Activated CD4-positive, alpha-beta memory T cell treated with anti-CD3 and anti-CD28 coated beads, Interleukin-2, amount 10 ng/mL, durations not matched to agents 7 days and 5 days (primary cell): ENCODE measurements at regions of chr19 and their contacts with region 1.

Region 1: GRCh38 chr19:47210689-47211316 is 20.2 kb downstream of the BBC3 start:
- DNase-seq: peak; percentile 84
- H3K4me3 Mint-ChIP-seq: no peak overlapping the region
- H3K27ac Mint-ChIP-seq: peak overlapping the region; percentile 72
- H3K4me1 Mint-ChIP-seq: peaks cover 16% of the 10 kb centered on the region
- H3K27me3 Mint-ChIP-seq: no peaks in the 10 kb centered on the region

Region 2: DNA sequence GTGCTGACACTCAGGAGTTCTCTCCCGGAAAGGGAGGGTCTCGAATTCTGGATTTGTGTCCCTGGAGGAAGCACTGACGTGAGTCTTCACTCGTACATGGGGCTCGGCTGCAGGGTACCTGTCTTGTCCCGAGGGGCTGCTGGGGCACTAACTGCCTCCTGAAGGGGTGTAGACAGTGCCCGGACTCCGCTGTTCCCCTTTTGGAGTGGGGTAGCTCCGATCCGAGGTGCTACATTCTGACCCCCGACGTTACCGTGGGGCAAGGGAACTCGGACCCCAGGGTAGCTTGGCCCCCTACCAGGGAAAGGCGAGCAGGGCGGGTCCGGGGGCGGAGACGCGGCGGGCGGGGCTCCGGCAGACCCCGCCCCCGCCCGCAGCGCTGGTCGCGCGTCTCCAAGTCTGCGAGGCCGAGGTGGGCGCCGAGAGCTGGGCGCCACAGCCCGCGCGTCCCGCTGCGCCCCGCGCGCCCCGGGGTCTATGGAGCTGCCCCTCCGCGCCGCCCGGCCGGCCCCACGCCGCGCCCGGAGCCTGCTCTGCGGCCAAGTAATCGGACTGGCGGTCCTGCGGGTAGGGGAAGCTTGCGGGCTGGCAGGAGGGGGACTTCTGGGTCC is 191.3 kb before region 1 on chr19 and contains the start of gene NPAS1:
- CTCF ChIA-PET with region 1: no interaction called
- POLR2A ChIA-PET with region 1: no interaction called
- DNase-seq: no peak
- H3K4me3 Mint-ChIP-seq: no peak within 1 kb of the TSS
- H3K27ac Mint-ChIP-seq: no peak within 1 kb of the TSS
- H3K4me1 Mint-ChIP-seq: peaks cover 11% of the 10 kb centered on the region
- H3K27me3 Mint-ChIP-seq: peaks cover 50% of the 10 kb centered on the region
- total RNA-seq, gene NPAS1: 0.20 to 0.48 TPM

Region 3: DNA sequence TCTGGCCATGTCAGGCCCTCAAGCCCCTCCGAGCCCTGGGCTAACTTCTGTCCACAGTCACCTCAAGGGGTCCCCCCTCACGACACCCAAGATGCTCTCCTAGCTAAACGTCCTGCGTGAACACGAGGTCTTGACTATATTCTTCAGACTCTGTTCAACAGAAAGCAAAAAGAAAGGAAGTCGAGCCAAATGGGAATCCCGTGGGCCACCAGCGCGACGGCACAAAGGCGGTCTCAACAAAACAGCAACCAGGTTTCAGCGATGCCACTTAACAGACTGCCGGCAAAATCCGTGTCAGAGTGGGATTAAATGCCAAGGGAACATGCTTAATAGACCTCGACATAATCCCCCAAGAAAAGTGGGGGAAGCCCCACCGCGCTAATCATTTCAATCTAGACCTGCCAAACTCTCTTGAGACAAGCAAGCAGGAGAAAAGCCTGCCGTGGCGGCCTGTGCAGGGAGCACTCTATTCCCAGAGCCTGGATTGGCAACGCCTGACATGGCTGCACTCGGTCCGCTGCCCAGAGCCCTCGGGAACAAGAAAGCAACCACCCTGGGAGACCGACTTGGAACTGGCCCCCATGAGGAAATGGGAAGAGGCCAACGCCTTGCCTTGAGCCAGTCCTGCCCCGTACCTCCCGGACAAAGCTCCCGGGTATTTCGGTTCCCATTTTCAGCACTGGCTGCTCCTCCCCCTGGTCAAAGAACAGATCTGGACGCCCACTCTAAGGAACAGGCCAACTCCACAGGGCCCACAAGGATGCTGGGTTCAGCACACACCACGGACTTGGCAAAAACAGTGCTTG is 113.2 kb before region 1 on chr19:
- CTCF ChIA-PET with region 1: no interaction called
- POLR2A ChIA-PET with region 1: no interaction called
- DNase-seq: no peak
- H3K4me3 Mint-ChIP-seq: no peak overlapping the region
- H3K27ac Mint-ChIP-seq: peak overlapping the region; percentile 52
- H3K4me1 Mint-ChIP-seq: peaks cover 73% of the 10 kb centered on the region
- H3K27me3 Mint-ChIP-seq: no peaks in the 10 kb centered on the region

Region 4: GRCh38 chr19:47143322-47144073 is 67.3 kb before region 1 on chr19:
- CTCF ChIA-PET with region 1: interaction called, 45 read pairs
- POLR2A ChIA-PET with region 1: no interaction called
- DNase-seq: no peak
- H3K4me3 Mint-ChIP-seq: no peak overlapping the region
- H3K27ac Mint-ChIP-seq: peak overlapping the region; percentile 21
- H3K4me1 Mint-ChIP-seq: peaks cover 55% of the 10 kb centered on the region
- H3K27me3 Mint-ChIP-seq: no peaks in the 10 kb centered on the region

Region 5: GRCh38 chr19:47200530-47200929 is 10.3 kb before region 1 on chr19:
- CTCF ChIA-PET with region 1: interaction called, 20 read pairs
- POLR2A ChIA-PET with region 1: interaction called, 3 read pairs
- DNase-seq: no peak
- H3K4me3 Mint-ChIP-seq: no peak overlapping the region
- H3K27ac Mint-ChIP-seq: no peak overlapping the region
- H3K4me1 Mint-ChIP-seq: peaks cover 2% of the 10 kb centered on the region
- H3K27me3 Mint-ChIP-seq: no peaks in the 10 kb centered on the region

Region 6: GRCh38 chr19:47231215-47231984 is 20.6 kb after region 1 on chr19:
- CTCF ChIA-PET with region 1: interaction called, 54 read pairs
- POLR2A ChIA-PET with region 1: interaction called, 84 read pairs
- DNase-seq: peak; percentile 92
- H3K4me3 Mint-ChIP-seq: peak overlapping the region; percentile 63
- H3K27ac Mint-ChIP-seq: peak overlapping the region; percentile 85
- H3K4me1 Mint-ChIP-seq: peaks cover 29% of the 10 kb centered on the region
- H3K27me3 Mint-ChIP-seq: no peaks in the 10 kb centered on the region

Region 7: DNA sequence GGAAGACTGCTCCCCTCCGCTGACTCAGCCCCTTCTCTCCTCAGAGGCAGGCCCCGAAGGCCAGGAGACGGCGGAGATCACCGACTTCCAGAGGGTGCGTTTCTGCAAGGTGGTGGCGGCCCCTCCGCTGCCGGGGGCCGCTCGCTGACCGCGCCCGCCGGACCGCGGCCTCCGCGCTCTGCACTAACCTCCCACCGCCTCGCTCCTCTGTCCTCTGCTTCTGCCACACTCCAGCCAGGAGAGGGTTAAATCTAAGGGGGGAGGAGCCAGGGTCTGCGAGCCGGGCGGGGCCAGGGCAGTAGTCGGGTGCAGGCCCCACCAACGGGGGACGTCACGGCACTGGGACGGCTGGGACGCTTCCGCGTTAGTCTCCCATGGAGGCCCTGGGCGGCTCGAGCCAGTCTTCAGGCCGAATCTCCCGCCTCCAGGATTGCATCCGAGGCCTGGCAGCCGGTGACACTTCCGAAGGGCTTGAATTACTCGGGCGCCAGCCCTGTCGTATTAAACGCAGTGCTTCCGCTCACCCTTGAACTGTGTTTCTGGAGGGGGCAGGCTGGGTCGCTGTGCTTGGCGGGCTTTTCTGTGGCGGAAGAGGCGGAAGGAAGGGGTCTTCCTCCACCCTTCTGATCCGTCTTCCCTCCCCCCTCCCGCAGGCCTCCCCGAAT is 62.6 kb after region 1 on chr19:
- CTCF ChIA-PET with region 1: interaction called, 6 read pairs
- POLR2A ChIA-PET with region 1: interaction called, 15 read pairs
- DNase-seq: peak; percentile 93
- H3K4me3 Mint-ChIP-seq: peak overlapping the region; percentile 98
- H3K27ac Mint-ChIP-seq: peak overlapping the region; percentile 99
- H3K4me1 Mint-ChIP-seq: peaks cover 21% of the 10 kb centered on the region
- H3K27me3 Mint-ChIP-seq: no peaks in the 10 kb centered on the region

Region 8: DNA sequence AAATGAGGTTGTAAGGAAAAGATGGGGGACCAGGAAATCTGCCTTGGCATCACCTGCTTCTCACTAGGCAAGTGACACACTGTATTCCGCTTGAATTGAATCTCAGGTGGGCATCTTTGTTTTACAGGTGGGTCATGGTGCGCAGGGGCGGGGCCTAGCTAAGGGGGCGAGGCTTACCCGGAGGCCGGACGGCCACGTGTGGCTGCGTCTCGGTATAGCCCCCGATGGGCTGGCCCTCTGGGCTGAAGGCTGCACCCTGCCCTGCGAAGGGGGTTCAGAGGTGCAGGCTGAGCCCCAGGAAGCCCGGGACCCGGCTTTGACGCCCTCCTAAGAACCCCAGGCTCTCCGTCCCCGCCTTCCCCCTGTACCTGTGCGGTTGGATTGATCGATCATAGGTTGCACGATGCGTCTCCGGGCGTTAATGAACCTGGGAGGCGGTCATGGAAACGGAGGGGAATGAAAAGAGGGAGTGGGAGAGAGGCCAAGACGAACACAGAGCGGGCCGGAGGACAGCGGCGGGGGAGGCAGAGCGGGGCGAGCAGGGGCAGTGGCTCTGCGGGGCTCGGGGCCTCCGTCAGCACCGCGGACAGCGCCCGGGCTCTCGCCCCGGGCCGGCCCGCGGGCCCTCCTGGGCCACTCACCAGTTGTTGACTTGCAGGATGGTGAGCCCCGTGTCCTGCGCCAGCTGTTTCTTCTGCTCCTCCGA is 196.1 kb after region 1 on chr19:
- CTCF ChIA-PET with region 1: no interaction called
- POLR2A ChIA-PET with region 1: no interaction called
- DNase-seq: no peak
- H3K4me3 Mint-ChIP-seq: no peak overlapping the region
- H3K27ac Mint-ChIP-seq: no peak overlapping the region
- H3K4me1 Mint-ChIP-seq: no peaks in the 10 kb centered on the region
- H3K27me3 Mint-ChIP-seq: peaks cover 38% of the 10 kb centered on the region